ENCODE measurements at regions of chr20 and their contacts with region 1.

Region 1: DNA sequence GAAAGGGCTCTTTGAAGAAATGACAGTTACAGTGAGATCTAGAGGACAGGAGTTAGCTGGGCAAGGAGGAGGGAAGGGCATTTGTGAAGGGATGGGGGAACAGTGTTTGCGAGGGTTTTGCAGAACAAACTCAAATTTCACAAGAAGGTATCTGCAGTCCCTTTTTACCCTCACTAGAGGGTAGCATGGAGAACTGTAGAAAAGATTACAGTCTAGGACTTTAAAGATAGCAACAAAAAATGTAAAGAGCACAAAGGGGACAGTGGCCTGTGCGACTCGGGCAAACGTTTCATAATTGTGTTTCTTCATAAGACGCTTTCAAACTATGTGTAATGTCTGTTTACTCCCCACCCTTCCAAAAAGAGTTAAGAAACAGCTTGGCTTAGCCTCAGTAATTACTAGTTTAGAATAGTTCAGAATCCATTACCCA is 21.2 kb upstream of the ASXL1 start:
- DNase-seq: no peak
- ATAC-seq: peak in 1 of 8 donors; percentile 27
- H3K4me3 ChIP-seq: no peak overlapping the region
- H3K27ac ChIP-seq: no peak overlapping the region
- H3K4me1 ChIP-seq: peaks cover 0 to 46% (median 36%) of the 10 kb centered on the region in 9 donors
- H3K27me3 ChIP-seq: no peaks in the 10 kb centered on the region
- CTCF ChIP-seq: peak in 8 of 9 donors; percentile 18 to 67 (median 58)

Region 2: GRCh38 chr20:32277361-32278198 is 59.4 kb before region 1 on chr20 and contains the start of gene KIF3B:
- intact Hi-C with region 1: loop called in 1 of 10 experiments (anchors 5 kb)
- DNase-seq: peak; percentile 85 to 93
- ATAC-seq: peak; percentile 92 to 98 (median 96)
- H3K4me3 ChIP-seq: peak within 1 kb of the TSS; percentile 68 to 99 (median 92)
- H3K27ac ChIP-seq: peak within 1 kb of the TSS; percentile 11 to 92 (median 83)
- H3K4me1 ChIP-seq: peaks cover 0 to 29% (median 23%) of the 10 kb centered on the region in 9 donors
- H3K27me3 ChIP-seq: no peaks in the 10 kb centered on the region
- CTCF ChIP-seq: no peak
- total RNA-seq, gene KIF3B: 9.2 to 16.3 (median 11.5) TPM

Region 3: GRCh38 chr20:32285621-32286371 is 51.1 kb before region 1 on chr20:
- intact Hi-C with region 1: loop called in 1 of 10 experiments (anchors 5 kb)
- DNase-seq: peak in 1 of 2 donors; percentile 12
- ATAC-seq: peak; percentile 55 to 82 (median 73)
- H3K4me3 ChIP-seq: peak overlapping the region in 4 of 10 donors; percentile 4 to 8 (median 5)
- H3K27ac ChIP-seq: peak overlapping the region in 9 of 10 donors; percentile 26 to 77 (median 64)
- H3K4me1 ChIP-seq: peaks cover 3 to 43% (median 29%) of the 10 kb centered on the region in 9 donors
- H3K27me3 ChIP-seq: no peaks in the 10 kb centered on the region
- CTCF ChIP-seq: no peak

Region 4: DNA sequence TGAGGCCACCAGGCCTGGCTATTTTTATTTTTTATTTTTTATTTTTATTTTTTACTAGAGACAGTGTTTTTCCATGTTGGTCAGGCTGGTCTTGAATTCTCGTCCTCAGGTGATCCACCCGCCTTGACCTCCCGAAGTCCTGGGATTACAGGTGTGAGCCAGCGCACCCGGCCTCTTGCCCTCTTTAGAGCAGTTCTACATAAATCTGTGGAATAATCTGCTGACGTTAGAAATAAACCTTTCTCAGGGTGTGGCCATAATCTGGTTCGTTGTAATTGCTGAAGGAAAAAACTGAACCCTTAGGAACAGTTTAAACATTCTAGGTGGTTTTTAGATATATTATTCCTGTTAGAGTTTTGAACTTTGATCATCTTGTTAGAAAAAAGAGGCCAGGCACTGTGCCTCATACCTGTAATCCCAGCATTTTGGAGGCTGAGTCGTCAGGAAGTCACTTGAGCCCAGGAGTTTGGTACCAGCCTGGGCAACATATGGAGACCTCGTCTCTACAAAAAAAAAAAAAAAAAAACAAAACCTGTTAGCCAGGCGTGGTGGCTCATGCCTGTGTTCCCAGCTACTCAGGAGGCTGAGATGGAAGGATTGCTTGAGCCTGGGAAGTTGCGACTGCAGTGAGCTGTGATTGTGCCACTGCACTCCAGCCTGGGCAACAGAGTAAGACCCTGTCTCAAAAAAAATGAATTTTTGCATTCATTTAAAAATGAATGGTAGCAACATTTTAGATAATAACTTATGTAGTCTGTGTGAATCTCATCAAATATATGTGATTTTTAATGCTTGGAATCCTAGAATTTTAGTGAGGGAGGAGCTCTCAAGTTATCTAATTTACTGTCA is 45.4 kb after region 1 on chr20:
- intact Hi-C with region 1: no loop called
- DNase-seq: no peak
- ATAC-seq: no peak
- H3K4me3 ChIP-seq: no peak overlapping the region
- H3K27ac ChIP-seq: no peak overlapping the region
- H3K4me1 ChIP-seq: peaks cover 0 to 38% (median 23%) of the 10 kb centered on the region in 9 donors
- H3K27me3 ChIP-seq: no peaks in the 10 kb centered on the region
- CTCF ChIP-seq: no peak

Region 5: DNA sequence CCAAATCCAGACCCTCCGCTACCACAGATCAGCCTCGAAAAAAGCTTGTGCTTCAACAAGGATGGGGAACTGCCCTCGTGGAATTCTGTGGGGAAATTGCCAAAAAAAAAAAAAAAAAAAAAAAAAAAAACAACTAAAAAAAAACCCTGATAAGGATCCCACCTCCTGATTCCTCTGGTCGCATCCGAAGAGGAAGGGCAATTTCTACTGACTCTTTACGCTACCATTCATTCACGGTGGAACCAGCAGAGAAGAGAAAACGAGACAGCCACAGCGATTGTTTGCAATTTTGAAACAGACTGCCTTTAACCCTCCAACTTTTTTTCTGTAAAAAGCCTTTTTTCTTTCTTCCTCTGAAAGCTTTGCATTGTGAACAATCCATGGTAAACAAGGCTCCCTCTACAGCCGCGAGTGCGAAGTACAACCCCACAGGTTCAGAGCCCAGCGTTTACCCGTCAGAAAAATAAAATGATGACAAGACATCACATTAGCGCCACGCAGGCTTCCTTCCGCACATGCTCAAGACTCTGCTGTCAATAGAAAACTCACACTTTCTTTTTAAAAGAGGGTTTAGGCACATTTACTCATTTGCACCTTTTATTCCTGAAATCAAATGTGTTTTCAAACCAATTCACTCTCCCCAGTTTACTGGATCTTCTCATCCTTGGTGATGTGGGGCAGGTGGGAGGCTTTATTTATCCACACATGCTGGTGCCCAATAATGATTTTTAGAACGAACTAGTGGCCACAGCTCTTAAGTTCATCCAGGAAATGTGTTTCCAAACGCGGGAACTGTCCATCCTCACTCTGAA is 148.2 kb after region 1 on chr20:
- intact Hi-C with region 1: loop called in 5 of 10 experiments (anchors 5 to 10 kb)
- DNase-seq: peak; percentile 70 to 78
- ATAC-seq: peak in 7 of 8 donors; percentile 23 to 72 (median 65)
- H3K4me3 ChIP-seq: peak overlapping the region; percentile 48 to 92 (median 76)
- H3K27ac ChIP-seq: peak overlapping the region in 9 of 10 donors; percentile 44 to 91 (median 84)
- H3K4me1 ChIP-seq: peaks cover 4 to 45% (median 37%) of the 10 kb centered on the region in 9 donors
- H3K27me3 ChIP-seq: no peaks in the 10 kb centered on the region
- CTCF ChIP-seq: peak; percentile 62 to 89 (median 78)

Region 6: GRCh38 chr20:32652739-32653526 is 316.0 kb after region 1 on chr20:
- intact Hi-C with region 1: loop called in 2 of 10 experiments (anchors 10 kb)
- DNase-seq: peak; percentile 85 to 87
- ATAC-seq: peak; percentile 93 to 99 (median 97)
- H3K4me3 ChIP-seq: no peak overlapping the region
- H3K27ac ChIP-seq: no peak overlapping the region
- H3K4me1 ChIP-seq: peaks cover 0 to 9% (median 4%) of the 10 kb centered on the region in 9 donors
- H3K27me3 ChIP-seq: no peaks in the 10 kb centered on the region
- CTCF ChIP-seq: peak; percentile 88 to 97 (median 95)

Measured in heart right ventricle (tissue), 16 donors.